ENCODE measurements at regions of chr1 and their contacts with region 1.

Region 1: DNA sequence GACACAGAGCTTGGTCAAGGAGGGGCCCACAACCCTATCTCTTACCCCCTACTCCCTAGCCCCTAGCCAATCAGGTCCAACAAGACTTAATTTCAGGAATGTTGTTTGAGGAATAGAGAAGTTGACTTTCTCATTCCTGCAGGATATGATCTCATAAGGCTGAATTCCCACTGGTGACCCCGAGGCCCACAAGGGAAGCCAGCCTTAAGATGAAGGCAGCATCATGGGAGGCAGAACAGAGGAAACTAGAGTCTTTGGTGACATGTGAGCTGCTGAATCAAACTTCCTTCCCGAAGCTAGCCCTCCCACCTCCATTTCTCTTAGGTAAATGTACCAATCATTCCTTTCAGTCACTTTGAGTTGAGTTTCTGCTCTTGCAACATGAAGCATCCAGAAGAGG is 9.1 kb upstream of the PDIK1L start:
- DNase-seq: no peak
- H3K4me3 ChIP-seq: no peak overlapping the region
- H3K27ac ChIP-seq: no peak overlapping the region
- H3K4me1 ChIP-seq: no peaks in the 10 kb centered on the region
- CTCF ChIP-seq: no peak

Region 2: DNA sequence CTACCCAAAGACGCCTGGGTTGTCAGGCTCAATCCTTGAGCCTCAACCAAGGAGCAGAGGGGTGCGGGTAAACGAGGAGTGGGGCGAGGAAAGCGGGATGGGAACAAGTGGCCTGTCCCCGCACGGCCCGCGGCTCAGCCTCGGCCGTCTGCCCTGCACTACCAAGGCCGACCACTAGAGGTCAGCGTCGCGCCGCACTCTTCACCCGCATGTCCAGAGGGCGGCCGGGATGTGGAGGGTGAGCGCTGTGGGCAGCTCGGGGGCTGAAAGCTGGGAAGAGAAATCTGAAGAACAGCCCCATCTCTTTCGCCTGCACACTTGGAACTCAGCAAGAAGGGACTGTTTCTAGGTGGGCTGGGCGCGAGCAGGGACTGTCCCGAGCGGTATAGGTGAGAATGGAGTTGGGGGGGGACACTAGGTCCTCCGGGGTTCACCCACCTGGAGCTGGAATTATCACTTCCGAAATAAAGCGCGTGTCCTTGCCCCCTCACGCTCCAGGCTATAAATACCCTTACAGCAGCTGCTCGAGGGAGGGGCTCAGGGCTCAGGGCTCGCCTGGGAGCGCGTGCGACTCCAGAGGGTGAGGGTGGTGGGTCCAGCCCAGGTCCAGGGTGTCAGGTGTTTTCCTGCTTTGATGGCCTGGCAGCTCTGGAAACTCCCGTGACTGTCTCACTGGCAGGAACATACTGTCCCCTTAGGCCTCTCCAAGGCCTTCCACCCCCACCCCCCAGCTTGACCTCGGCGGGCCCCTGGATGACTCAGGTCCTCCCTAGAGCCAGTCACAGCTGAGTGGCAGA is 66.4 kb before region 1 on chr1:
- CTCF ChIA-PET with region 1: no interaction called
- POLR2A ChIA-PET with region 1: no interaction called
- intact Hi-C with region 1: loop called (anchors 2 kb)
- DNase-seq: peak; percentile 71
- H3K4me3 ChIP-seq: peak overlapping the region; percentile 75
- H3K27ac ChIP-seq: no peak overlapping the region
- H3K4me1 ChIP-seq: peaks cover 7% of the 10 kb centered on the region
- CTCF ChIP-seq: peak; percentile 93

Region 3: DNA sequence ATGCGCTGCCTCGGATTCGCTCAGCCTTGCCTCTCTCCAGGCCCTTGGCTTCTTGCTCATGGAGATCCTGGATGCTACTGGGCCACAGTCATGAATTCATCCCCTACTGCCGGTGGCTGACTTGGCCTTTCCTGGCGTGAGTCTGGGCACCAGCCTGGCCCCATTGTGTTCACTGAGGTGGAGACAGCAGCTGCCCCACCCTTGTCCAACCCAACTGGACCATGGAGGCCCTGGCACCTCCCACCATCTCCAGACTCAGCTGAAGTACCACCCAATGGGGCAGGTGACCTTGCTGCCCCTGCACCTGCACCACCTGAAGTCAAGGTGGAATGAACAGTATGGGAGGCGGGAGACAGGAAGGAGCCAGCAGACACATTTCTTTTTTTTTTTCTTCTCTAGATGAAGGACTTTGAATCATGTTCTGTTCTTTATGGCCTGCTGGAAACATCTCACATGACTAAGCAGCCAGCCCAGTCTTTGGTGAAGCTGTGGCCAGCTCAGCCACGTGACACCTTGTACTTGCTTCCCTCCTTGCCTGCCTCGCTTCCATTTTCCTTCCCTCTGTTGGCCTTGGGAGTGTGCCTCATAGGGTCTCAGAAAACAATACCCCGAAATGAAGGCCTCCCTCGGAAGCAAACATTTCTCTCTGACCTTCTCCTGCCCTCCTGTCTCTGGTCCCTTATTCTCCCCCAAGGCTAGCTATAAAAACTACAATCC is 52.8 kb before region 1 on chr1:
- CTCF ChIA-PET with region 1: no interaction called
- POLR2A ChIA-PET with region 1: no interaction called
- intact Hi-C with region 1: no loop called
- DNase-seq: no peak
- H3K4me3 ChIP-seq: no peak overlapping the region
- H3K27ac ChIP-seq: no peak overlapping the region
- H3K4me1 ChIP-seq: no peaks in the 10 kb centered on the region
- CTCF ChIP-seq: no peak

Region 4: DNA sequence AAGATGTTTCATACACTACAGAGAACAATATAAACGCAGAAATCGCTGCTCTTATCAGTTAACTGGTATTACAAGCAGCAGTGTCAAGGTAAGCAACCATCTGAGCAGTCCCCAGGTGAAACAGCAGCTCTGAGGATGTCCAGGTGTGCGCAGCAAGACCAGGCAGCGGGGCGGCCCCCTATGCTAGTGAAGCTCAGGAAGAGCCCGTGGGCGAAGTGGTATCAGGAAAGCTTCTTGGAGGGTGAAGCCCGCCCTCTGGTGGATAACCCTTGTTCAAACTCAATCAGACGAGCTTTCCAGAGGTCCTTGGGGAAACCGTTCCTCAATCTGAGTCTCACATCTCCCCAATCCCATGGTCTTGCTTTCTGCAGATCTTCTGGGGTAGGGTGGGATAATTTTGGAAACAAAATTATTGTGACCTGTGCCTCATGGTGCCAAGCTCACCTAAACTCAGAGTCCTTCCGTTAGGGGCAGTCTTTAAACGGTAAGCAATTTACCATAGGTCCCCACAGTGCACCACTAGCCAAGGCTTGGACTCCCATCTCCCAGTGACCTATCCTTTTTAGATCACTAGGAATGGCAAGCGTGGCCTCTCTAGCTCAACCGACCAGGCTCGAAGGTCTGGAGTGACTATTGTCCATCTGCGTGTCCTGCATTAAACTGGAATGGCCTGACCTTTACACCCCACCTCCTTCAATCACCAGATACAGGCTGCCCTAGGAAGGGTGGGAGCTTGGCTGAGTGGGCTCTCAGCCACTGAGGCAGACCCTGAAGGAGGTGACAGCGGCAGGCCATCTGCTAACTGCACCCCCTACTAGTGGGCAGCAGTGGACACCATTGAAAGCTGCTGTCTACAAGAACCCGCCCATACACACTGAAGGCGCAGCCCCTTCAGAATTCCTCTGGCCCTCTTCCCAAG is 42.8 kb after region 1 on chr1:
- CTCF ChIA-PET with region 1: interaction called, 5 read pairs
- POLR2A ChIA-PET with region 1: interaction called, 10 read pairs
- intact Hi-C with region 1: loop called (anchors 1 kb)
- DNase-seq: peak; percentile 83
- H3K4me3 ChIP-seq: no peak overlapping the region
- H3K27ac ChIP-seq: no peak overlapping the region
- H3K4me1 ChIP-seq: no peaks in the 10 kb centered on the region
- CTCF ChIP-seq: peak; percentile 86

Region 5: GRCh38 chr1:26254404-26254803 is 151.9 kb after region 1 on chr1:
- CTCF ChIA-PET with region 1: no interaction called
- POLR2A ChIA-PET with region 1: no interaction called
- intact Hi-C with region 1: no loop called
- DNase-seq: no peak
- H3K4me3 ChIP-seq: no peak overlapping the region
- H3K27ac ChIP-seq: no peak overlapping the region
- H3K4me1 ChIP-seq: peaks cover 9% of the 10 kb centered on the region
- CTCF ChIP-seq: no peak

Region 6: DNA sequence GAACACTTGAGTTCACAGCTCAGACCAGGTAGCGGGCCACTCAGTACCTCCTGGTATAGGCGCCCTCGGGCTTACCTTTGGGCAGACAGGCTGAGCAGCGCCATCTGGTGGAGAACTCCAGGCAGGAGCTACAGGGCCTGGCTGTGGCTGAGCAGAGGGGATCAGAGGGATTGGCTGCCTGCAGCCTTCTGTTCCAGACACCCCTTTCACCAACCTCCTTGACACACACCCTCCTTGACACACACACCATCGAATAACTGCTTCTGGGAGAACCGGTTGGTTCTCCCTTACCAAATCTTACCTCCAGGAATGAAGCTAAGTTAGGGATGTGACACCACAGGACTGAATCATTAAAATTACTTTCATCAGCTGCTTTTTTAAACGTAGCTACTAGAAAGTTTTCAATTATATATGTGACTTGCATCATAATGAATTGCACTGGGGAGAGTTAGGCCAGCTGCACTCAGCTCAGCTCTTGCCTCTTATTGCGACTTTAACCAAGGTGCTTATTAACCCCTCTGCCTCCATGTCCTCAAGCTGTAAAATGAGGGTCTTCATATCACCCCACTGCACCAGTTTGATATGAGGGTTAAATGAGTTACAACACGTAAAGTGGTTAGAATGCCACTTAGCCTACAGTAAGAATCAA is 314.7 kb after region 1 on chr1:
- CTCF ChIA-PET with region 1: no interaction called
- POLR2A ChIA-PET with region 1: no interaction called
- intact Hi-C with region 1: loop called (anchors 10 kb)
- DNase-seq: peak; percentile 86
- H3K4me3 ChIP-seq: no peak overlapping the region
- H3K27ac ChIP-seq: no peak overlapping the region
- H3K4me1 ChIP-seq: no peaks in the 10 kb centered on the region
- CTCF ChIP-seq: peak; percentile 92